AG04450 (cell line): ENCODE measurements at regions of chr5 and their contacts with region 1.

Region 1: GRCh38 chr5:134845852-134846640 is at the start of gene C5orf24:
- DNase-seq: peak; percentile 91
- H3K4me3 ChIP-seq: peak within 1 kb of the TSS; percentile 86
- H3K27ac ChIP-seq: peak within 1 kb of the TSS; percentile 89
- H3K27me3 ChIP-seq: no peaks in the 10 kb centered on the region
- CTCF ChIP-seq: no peak
- polyA plus RNA-seq, gene C5orf24: 73.0 and 92.3 TPM in 2 replicates

Region 2: GRCh38 chr5:134637161-134637582 is 208.9 kb before region 1 on chr5:
- CTCF ChIA-PET with region 1: no interaction called
- POLR2A ChIA-PET with region 1: no interaction called
- DNase-seq: no peak
- H3K4me3 ChIP-seq: no peak overlapping the region
- H3K27ac ChIP-seq: no peak overlapping the region
- H3K27me3 ChIP-seq: no peaks in the 10 kb centered on the region
- CTCF ChIP-seq: no peak

Region 3: GRCh38 chr5:134794082-134794481 is 52.0 kb before region 1 on chr5:
- CTCF ChIA-PET with region 1: no interaction called
- POLR2A ChIA-PET with region 1: no interaction called
- DNase-seq: no peak
- H3K4me3 ChIP-seq: no peak overlapping the region
- H3K27ac ChIP-seq: no peak overlapping the region
- H3K27me3 ChIP-seq: no peaks in the 10 kb centered on the region
- CTCF ChIP-seq: no peak

Region 4: GRCh38 chr5:134833340-134834032 is 12.6 kb before region 1 on chr5:
- CTCF ChIA-PET with region 1: interaction called, 7 read pairs
- POLR2A ChIA-PET with region 1: interaction called, 34 read pairs
- DNase-seq: peak; percentile 63
- H3K4me3 ChIP-seq: no peak overlapping the region
- H3K27ac ChIP-seq: peak overlapping the region; percentile 75
- H3K27me3 ChIP-seq: no peaks in the 10 kb centered on the region
- CTCF ChIP-seq: no peak

Region 5: DNA sequence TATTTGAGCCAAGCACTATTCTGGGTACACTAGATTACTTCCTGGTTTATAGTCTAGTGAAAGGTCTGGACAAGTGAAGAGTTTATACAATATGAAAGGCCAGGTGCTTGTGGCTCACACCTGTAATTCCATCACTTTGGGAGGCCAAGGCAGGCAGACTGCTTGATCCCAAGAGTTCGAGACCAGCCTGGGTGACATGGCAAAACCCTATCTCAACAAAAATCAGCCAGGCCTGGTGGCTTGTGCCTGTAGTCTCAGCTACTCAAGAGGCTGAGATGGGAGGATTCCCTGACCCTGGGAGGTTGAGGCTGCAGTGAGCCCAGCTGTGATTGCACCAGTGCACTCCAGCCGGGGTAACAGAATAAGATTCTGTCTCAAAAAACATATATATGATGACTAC is 18.7 kb after region 1 on chr5:
- CTCF ChIA-PET with region 1: no interaction called
- POLR2A ChIA-PET with region 1: interaction called, 15 read pairs
- DNase-seq: no peak
- H3K4me3 ChIP-seq: no peak overlapping the region
- H3K27ac ChIP-seq: no peak overlapping the region
- H3K27me3 ChIP-seq: no peaks in the 10 kb centered on the region
- CTCF ChIP-seq: no peak